ENCODE measurements at regions of chr2 and their contacts with region 1.

Region 1: DNA sequence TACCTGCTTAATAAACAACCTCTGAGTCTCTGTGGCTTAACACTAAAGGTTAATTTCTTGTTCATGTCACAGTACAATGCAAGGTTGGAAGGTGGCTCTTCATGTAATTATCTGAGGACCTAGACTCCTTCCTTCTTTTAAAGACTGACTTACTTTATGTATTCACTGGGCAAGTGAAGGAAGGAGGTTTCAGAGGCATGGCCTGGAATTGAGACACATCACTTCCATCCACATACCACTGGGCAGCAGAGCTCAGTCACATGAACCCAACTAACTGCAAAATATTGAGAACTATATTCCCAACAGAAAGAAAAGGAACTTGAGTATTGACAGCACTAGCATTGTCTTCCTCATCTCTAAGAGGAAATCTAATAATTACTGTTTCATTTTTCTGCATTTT is 57.5 kb upstream of the FN1 start:
- DNase-seq: no peak
- ATAC-seq: no peak
- H3K4me3 ChIP-seq: no peak overlapping the region
- H3K4me3 Mint-ChIP-seq: no peak overlapping the region
- H3K27ac ChIP-seq: no peak overlapping the region
- H3K27ac Mint-ChIP-seq: no peak overlapping the region
- H3K4me1 ChIP-seq: no peaks in the 10 kb centered on the region
- H3K4me1 Mint-ChIP-seq: no peaks in the 10 kb centered on the region
- H3K27me3 ChIP-seq: no peaks in the 10 kb centered on the region
- H3K27me3 Mint-ChIP-seq: peaks cover 8 to 20% of the 10 kb centered on the region in 2 donors

Region 2: GRCh38 chr2:215505044-215505786 is 11.8 kb after region 1 on chr2:
- CTCF ChIA-PET with region 1: no interaction called
- POLR2A ChIA-PET with region 1: interaction called in 1 of 2 experiments, 11 read pairs
- DNase-seq: no peak
- ATAC-seq: no peak
- H3K4me3 ChIP-seq: no peak overlapping the region
- H3K4me3 Mint-ChIP-seq: no peak overlapping the region
- H3K27ac ChIP-seq: no peak overlapping the region
- H3K27ac Mint-ChIP-seq: no peak overlapping the region
- H3K4me1 ChIP-seq: no peaks in the 10 kb centered on the region
- H3K4me1 Mint-ChIP-seq: no peaks in the 10 kb centered on the region
- H3K27me3 ChIP-seq: no peaks in the 10 kb centered on the region
- H3K27me3 Mint-ChIP-seq: peaks cover 0 to 7% of the 10 kb centered on the region in 2 donors